Spleen (tissue), 13 donors: ENCODE measurements at regions of chr12 and their contacts with region 1.

Region 1: DNA sequence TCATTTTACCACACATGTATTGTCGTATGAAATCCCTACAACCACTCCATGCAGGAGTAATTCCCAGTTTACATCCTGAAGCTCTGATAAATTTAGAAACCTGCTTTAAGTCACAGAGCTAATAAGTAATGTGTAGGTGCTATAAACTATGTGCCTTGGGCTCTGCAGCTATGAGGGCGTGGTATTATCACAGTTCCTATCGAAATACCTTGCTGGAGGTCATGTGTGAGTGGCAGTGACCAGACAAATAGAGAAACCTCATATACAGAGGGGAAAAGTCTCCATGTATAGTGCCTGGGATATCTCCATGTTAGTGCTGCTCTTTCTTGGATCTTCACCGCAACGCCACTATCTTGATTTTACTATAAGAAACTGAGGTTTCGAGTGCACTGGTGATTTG is 883 bp upstream of the TBC1D15 start:
- DNase-seq: no peak
- H3K4me3 ChIP-seq: peak overlapping the region in 4 of 8 donors; percentile 68 to 80 (median 72)
- H3K27ac ChIP-seq: peak overlapping the region; percentile 86 to 98 (median 96)
- H3K4me1 ChIP-seq: peaks cover 24 to 44% (median 38%) of the 10 kb centered on the region in 6 donors
- H3K27me3 ChIP-seq: peaks cover 0 to 4% (median 0%) of the 10 kb centered on the region in 7 donors
- CTCF ChIP-seq: no peak
- POLR2A ChIP-seq: no peak

Region 2: DNA sequence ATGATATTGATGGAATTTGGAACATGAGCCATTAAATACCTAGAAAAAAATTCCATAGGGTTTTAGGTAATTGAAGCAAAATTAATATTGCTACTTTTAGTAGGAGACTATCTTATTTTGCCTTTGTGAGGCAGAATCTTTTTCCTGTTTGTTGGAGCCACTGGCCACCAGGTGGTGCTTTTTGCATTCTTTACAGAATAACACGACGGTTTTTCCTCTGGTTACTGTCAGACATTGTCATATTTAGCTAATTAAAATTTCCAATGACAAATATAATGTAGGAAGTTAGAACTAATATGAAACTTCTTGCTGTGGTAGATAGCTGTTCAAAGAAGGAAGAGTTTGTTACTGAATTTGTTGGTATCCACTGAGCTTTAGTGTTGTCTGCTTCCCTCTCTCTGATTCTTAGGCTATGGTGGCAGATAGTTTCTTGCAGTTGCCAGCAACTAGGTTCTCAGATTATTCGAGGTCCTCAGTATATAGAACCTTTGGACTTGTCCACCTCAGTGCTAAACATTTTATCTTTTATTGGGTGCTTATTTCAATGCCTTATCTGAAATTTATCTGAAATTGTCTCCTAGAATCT is 58.3 kb before region 1 on chr12:
- intact Hi-C with region 1: loop called (anchors 10 kb)
- DNase-seq: no peak
- H3K4me3 ChIP-seq: no peak overlapping the region
- H3K27ac ChIP-seq: peak overlapping the region in 4 of 8 donors; percentile 2 to 31 (median 9)
- H3K4me1 ChIP-seq: peaks cover 0 to 46% (median 21%) of the 10 kb centered on the region in 6 donors
- H3K27me3 ChIP-seq: no peaks in the 10 kb centered on the region
- CTCF ChIP-seq: peak in 10 of 11 experiments; percentile 12 to 75 (median 60)
- POLR2A ChIP-seq: no peak

Region 3: GRCh38 chr12:72214163-72214562 is 375.5 kb after region 1 on chr12:
- intact Hi-C with region 1: no loop called
- DNase-seq: no peak
- H3K4me3 ChIP-seq: no peak overlapping the region
- H3K27ac ChIP-seq: no peak overlapping the region
- H3K4me1 ChIP-seq: no peaks in the 10 kb centered on the region
- H3K27me3 ChIP-seq: no peaks in the 10 kb centered on the region
- CTCF ChIP-seq: no peak
- POLR2A ChIP-seq: no peak